SK-N-SH (cell line): ENCODE measurements at regions of chr14 and their contacts with region 1.

Region 1: DNA sequence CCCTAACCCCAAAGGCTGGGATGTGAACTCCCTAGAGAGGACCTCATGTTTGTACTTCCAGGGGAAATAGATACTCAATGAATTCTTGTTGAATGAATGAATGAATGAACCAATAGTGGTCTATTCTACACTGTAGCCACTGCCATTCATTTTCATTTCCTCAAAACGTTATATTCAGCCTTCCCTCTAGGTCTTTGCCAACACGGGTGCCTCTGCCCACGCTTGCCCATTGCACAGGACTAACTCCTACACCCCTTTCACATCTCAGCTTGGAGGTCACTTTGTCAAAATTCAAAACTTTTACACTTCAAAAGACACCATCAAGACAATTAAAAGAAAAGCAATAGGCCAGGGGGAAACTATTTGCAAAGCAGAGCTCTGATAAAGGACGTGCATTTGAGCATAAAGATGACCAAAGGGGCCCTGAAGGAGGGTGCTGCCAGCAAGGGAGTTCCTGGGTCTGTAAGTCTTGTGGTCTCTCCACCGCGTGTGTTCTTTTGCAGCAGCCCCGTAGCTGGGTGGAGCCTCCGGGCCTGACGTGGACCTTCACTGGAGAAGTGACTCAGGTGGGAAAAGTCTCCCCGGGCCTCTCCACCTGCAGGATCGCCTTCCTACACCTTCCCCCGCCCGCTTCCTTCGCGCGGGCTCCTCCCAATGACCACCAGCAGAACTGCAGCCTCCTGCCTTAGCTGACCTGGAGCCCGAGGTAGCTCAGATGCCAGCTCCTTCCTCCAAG is 31.5 kb downstream of the TMEM63C start:
- DNase-seq: peak; percentile 82
- H3K4me3 ChIP-seq: peak overlapping the region in 1 of 2 experiments; percentile 16; a peak in 1 of 4 replicates
- H3K27ac ChIP-seq: no peak overlapping the region
- H3K4me1 ChIP-seq: peaks cover 0 to 3% of the 10 kb centered on the region in 2 experiments; a peak in 1 of 4 replicates
- H3K27me3 ChIP-seq: no peaks in the 10 kb centered on the region
- CTCF ChIP-seq: peak; percentile 61
- EP300 ChIP-seq: no peak
- RAD21 ChIP-seq: peak; percentile 77

Region 2: GRCh38 chr14:77139540-77140358 is 73.4 kb before region 1 on chr14:
- CTCF ChIA-PET with region 1: interaction called, 18 read pairs
- POLR2A ChIA-PET with region 1: no interaction called
- DNase-seq: peak; percentile 90
- H3K4me3 ChIP-seq: peak overlapping the region; percentile 50 to 62; a peak in 3 of 4 replicates
- H3K27ac ChIP-seq: no peak overlapping the region
- H3K4me1 ChIP-seq: peaks cover 0 to 29% of the 10 kb centered on the region in 2 experiments; a peak in 3 of 4 replicates
- H3K27me3 ChIP-seq: peaks cover 40% of the 10 kb centered on the region
- CTCF ChIP-seq: peak; percentile 63
- EP300 ChIP-seq: no peak
- RAD21 ChIP-seq: peak; percentile 54

Region 3: GRCh38 chr14:77172916-77173315 is 40.2 kb before region 1 on chr14:
- CTCF ChIA-PET with region 1: interaction called, 11 read pairs
- POLR2A ChIA-PET with region 1: no interaction called
- DNase-seq: no peak
- H3K4me3 ChIP-seq: no peak overlapping the region
- H3K27ac ChIP-seq: no peak overlapping the region
- H3K4me1 ChIP-seq: no peaks in the 10 kb centered on the region
- H3K27me3 ChIP-seq: no peaks in the 10 kb centered on the region
- CTCF ChIP-seq: no peak
- EP300 ChIP-seq: no peak
- RAD21 ChIP-seq: no peak

Region 4: DNA sequence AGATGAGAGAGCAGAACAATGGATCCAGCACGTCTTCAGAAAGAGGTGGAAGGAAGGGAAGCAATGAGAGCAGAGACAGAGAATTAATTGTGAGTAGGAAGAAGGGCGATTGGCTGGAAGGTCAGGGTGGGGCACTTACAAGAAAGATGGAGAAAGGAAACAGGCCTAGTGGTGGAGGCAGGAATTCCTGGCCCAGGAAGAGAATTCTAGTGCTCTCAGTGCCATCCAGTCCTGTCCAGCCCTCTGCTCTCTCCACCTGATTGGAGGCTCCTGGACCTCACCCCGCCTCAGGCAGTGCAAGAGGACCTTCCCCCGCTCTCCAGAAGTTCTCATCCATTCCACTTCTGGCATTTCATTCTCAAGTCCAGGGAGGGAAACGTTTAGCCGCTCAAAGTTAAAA is 14.9 kb after region 1 on chr14:
- CTCF ChIA-PET with region 1: interaction called, 15 read pairs
- POLR2A ChIA-PET with region 1: no interaction called
- DNase-seq: no peak
- H3K4me3 ChIP-seq: no peak overlapping the region
- H3K27ac ChIP-seq: no peak overlapping the region
- H3K4me1 ChIP-seq: no peaks in the 10 kb centered on the region; a peak in 1 of 4 replicates
- H3K27me3 ChIP-seq: peaks cover 6% of the 10 kb centered on the region; the same call in 1 of the 2 replicates
- CTCF ChIP-seq: no peak
- EP300 ChIP-seq: no peak
- RAD21 ChIP-seq: no peak

Region 5: GRCh38 chr14:77275601-77276017 is 62.5 kb after region 1 on chr14:
- CTCF ChIA-PET with region 1: interaction called, 20 read pairs
- POLR2A ChIA-PET with region 1: no interaction called
- DNase-seq: peak; percentile 84
- H3K4me3 ChIP-seq: no peak overlapping the region
- H3K27ac ChIP-seq: peak overlapping the region in 1 of 2 experiments; percentile 65; a peak in 2 of 4 replicates
- H3K4me1 ChIP-seq: peaks cover 0 to 18% of the 10 kb centered on the region in 2 experiments; a peak in 1 of 4 replicates
- H3K27me3 ChIP-seq: peaks cover 7% of the 10 kb centered on the region
- CTCF ChIP-seq: no peak
- EP300 ChIP-seq: no peak
- RAD21 ChIP-seq: peak; percentile 52